AG04449 (cell line): ENCODE measurements at regions of chr5 and their contacts with region 1.

Region 1: GRCh38 chr5:41903892-41904799 is at the start of gene RIMOC1:
- DNase-seq: peak; percentile 99
- H3K4me3 ChIP-seq: peak within 1 kb of the TSS; percentile 93
- CTCF ChIP-seq: no peak

Region 2: GRCh38 chr5:41924872-41925554 is 20.9 kb after region 1 on chr5 and contains the start of gene FBXO4:
- CTCF ChIA-PET with region 1: interaction called, 3 read pairs
- POLR2A ChIA-PET with region 1: interaction called, 15 read pairs
- DNase-seq: no peak
- H3K4me3 ChIP-seq: peak within 1 kb of the TSS; percentile 72
- CTCF ChIP-seq: peak; percentile 90